Mammary epithelial cell (primary cell): ENCODE measurements at regions of chr2 and their contacts with region 1.

Region 1: DNA sequence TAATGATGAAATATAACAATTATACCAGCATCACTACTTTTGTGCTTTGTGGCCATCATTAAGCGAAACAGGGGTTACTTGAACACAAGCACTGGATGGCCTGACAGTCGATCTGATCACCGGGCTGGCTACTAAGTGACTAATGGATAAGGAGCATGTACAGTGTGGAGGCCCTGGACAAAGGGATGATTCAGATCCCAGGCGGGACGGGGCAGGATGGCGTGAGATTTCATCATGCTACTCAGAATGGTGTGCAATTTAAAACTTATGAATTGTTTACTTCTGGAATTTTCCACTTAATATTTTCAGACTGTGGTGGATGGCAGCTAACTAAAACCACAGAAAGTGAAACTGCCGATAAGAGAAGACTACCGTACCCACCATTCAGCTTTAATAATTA is 7.0 kb upstream of the CLIP4 start:
- DNase-seq: peak; percentile 97
- H3K4me3 ChIP-seq: peak overlapping the region in 1 of 3 experiments; percentile 19
- H3K27ac ChIP-seq: peak overlapping the region; percentile 99
- H3K4me1 ChIP-seq: peaks cover 53% of the 10 kb centered on the region
- H3K27me3 ChIP-seq: no peaks in the 10 kb centered on the region
- CTCF ChIP-seq: no peak

Region 2: GRCh38 chr2:28583899-28584553 is 524.2 kb before region 1 on chr2:
- CTCF ChIA-PET with region 1: no interaction called
- dilution Hi-C with region 1: no loop called
- in situ Hi-C with region 1: no loop called
- intact Hi-C with region 1: no loop called
- DNase-seq: peak; percentile 97
- H3K4me3 ChIP-seq: peak overlapping the region in 2 of 3 experiments; percentile 27 to 32
- H3K27ac ChIP-seq: peak overlapping the region; percentile 98
- H3K4me1 ChIP-seq: peaks cover 32% of the 10 kb centered on the region
- H3K27me3 ChIP-seq: no peaks in the 10 kb centered on the region
- CTCF ChIP-seq: no peak

Region 3: GRCh38 chr2:29059624-29060023 is 48.6 kb before region 1 on chr2:
- CTCF ChIA-PET with region 1: no interaction called
- dilution Hi-C with region 1: loop called (anchors 5 kb)
- in situ Hi-C with region 1: no loop called
- intact Hi-C with region 1: no loop called
- DNase-seq: no peak
- H3K4me3 ChIP-seq: no peak overlapping the region
- H3K27ac ChIP-seq: no peak overlapping the region
- H3K4me1 ChIP-seq: peaks cover 12% of the 10 kb centered on the region
- H3K27me3 ChIP-seq: no peaks in the 10 kb centered on the region
- CTCF ChIP-seq: no peak

Region 4: GRCh38 chr2:29066271-29066860 is 41.9 kb before region 1 on chr2:
- CTCF ChIA-PET with region 1: no interaction called
- dilution Hi-C with region 1: no loop called
- in situ Hi-C with region 1: loop called (anchors 5 kb)
- intact Hi-C with region 1: no loop called
- DNase-seq: peak; percentile 68
- H3K4me3 ChIP-seq: no peak overlapping the region
- H3K27ac ChIP-seq: peak overlapping the region; percentile 51
- H3K4me1 ChIP-seq: peaks cover 56% of the 10 kb centered on the region
- H3K27me3 ChIP-seq: no peaks in the 10 kb centered on the region
- CTCF ChIP-seq: no peak

Region 5: GRCh38 chr2:29463181-29463900 is 355.1 kb after region 1 on chr2:
- CTCF ChIA-PET with region 1: no interaction called
- dilution Hi-C with region 1: no loop called
- in situ Hi-C with region 1: no loop called
- intact Hi-C with region 1: no loop called
- DNase-seq: peak; percentile 60
- H3K4me3 ChIP-seq: no peak overlapping the region
- H3K27ac ChIP-seq: peak overlapping the region; percentile 72
- H3K4me1 ChIP-seq: peaks cover 19% of the 10 kb centered on the region
- H3K27me3 ChIP-seq: no peaks in the 10 kb centered on the region
- CTCF ChIP-seq: no peak